Activated CD4-positive, alpha-beta memory T cell treated with anti-CD3 and anti-CD28 coated beads for 36 hours (primary cell): ENCODE measurements at regions of chr11 and their contacts with region 1.

Region 1: DNA sequence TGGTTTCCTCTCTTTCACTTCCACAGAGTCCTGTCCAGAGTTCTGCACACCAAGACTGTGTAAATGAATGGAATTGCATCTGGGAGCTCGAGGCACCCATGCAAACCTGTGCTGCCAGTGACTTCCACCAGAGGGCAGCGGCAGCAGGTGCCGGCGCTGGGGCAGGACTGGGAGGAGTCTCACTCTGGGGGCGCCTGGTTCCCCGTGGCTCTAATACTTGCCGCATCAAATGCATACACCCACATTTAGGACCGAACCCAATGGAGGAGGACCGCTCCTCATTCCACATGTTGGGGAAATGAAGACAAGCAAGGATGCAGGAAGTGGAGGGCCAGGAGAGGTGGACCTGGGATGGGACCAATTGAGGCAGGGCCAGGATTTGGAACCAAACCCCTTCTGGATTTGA is 1.1 kb upstream of the CD6 start:
- DNase-seq: peak; percentile 89
- H3K4me3 Mint-ChIP-seq: peak overlapping the region; percentile 95
- H3K27ac Mint-ChIP-seq: peak overlapping the region; percentile 99
- H3K4me1 Mint-ChIP-seq: peaks cover 15% of the 10 kb centered on the region
- H3K27me3 Mint-ChIP-seq: no peaks in the 10 kb centered on the region

Region 2: DNA sequence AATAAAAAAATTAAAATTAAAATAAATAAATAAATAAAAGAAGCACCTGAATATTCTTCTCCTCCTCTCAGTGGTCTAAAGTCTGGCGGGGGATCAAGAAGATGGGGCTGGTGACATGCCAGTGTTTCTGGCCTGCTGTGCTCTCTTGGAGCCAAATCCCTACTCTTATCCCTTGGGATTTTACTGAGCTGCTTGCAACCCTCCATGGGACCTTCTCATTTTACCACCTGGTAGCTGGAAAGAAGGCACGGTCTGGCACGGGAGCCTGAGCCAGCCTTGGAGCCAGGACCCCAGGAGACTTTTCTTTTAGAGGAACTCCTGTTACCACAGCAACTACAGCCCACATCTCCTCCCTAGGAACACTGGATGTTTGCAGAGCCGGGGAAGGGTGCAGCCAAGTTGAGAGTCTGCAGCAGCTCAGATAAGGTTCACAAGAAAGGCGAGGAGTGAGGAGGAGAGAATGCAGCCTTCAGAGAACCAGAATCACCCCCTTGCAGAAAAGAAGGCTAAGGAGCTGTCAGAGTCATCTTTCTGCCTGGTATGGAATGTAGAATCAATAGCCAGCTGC is 22.6 kb after region 1 on chr11:
- CTCF ChIA-PET with region 1: interaction called, 10 read pairs
- POLR2A ChIA-PET with region 1: no interaction called
- intact Hi-C with region 1: loop called (anchors 1 kb)
- DNase-seq: peak; percentile 19
- H3K4me3 Mint-ChIP-seq: peak overlapping the region; percentile 68
- H3K27ac Mint-ChIP-seq: peak overlapping the region; percentile 97
- H3K4me1 Mint-ChIP-seq: peaks cover 81% of the 10 kb centered on the region
- H3K27me3 Mint-ChIP-seq: no peaks in the 10 kb centered on the region

Region 3: DNA sequence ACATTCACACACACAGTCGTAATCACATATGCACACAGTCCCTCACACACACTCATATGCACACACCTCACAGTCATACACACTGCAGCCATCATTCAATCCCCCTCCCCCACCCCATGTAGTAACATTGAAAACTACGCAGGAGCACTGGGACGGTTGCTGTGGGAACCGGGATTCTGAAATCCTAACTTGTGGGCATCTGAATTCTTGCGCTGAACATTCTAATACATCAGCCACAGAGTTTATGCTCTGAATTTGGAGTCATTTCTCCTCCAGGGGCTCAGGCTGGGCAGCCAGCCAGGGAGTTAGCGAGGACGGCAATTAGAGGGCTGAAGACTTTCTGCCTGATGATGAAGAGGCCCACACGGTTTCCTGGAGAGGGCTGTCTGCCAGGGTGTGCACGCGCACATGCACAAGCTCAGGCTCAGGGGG is 33.8 kb after region 1 on chr11:
- CTCF ChIA-PET with region 1: interaction called, 4 read pairs
- POLR2A ChIA-PET with region 1: interaction called, 4 read pairs
- intact Hi-C with region 1: loop called (anchors 1 kb)
- DNase-seq: peak; percentile 75
- H3K4me3 Mint-ChIP-seq: peak overlapping the region; percentile 75
- H3K27ac Mint-ChIP-seq: peak overlapping the region; percentile 97
- H3K4me1 Mint-ChIP-seq: peaks cover 82% of the 10 kb centered on the region
- H3K27me3 Mint-ChIP-seq: no peaks in the 10 kb centered on the region

Region 4: GRCh38 chr11:61129639-61130523 is 159.5 kb after region 1 on chr11:
- CTCF ChIA-PET with region 1: interaction called, 40 read pairs
- POLR2A ChIA-PET with region 1: interaction called, 3 read pairs
- intact Hi-C with region 1: loop called (anchors 1 kb)
- DNase-seq: peak; percentile 95
- H3K4me3 Mint-ChIP-seq: peak overlapping the region; percentile 17
- H3K27ac Mint-ChIP-seq: peak overlapping the region; percentile 57
- H3K4me1 Mint-ChIP-seq: peaks cover 25% of the 10 kb centered on the region
- H3K27me3 Mint-ChIP-seq: no peaks in the 10 kb centered on the region